ENCODE measurements at regions of chr15 and their contacts with region 1.

Region 1: GRCh38 chr15:61871926-61872522 is 188.2 kb downstream of the VPS13C start:
- DNase-seq: no peak
- ATAC-seq: no peak
- H3K4me3 ChIP-seq: no peak overlapping the region
- H3K27ac ChIP-seq: no peak overlapping the region
- H3K4me1 ChIP-seq: no peaks in the 10 kb centered on the region
- H3K27me3 ChIP-seq: no peaks in the 10 kb centered on the region
- CTCF ChIP-seq: peak in 4 of 5 experiments; percentile 24 to 57 (median 48)
- POLR2A ChIP-seq: no peak

Region 2: DNA sequence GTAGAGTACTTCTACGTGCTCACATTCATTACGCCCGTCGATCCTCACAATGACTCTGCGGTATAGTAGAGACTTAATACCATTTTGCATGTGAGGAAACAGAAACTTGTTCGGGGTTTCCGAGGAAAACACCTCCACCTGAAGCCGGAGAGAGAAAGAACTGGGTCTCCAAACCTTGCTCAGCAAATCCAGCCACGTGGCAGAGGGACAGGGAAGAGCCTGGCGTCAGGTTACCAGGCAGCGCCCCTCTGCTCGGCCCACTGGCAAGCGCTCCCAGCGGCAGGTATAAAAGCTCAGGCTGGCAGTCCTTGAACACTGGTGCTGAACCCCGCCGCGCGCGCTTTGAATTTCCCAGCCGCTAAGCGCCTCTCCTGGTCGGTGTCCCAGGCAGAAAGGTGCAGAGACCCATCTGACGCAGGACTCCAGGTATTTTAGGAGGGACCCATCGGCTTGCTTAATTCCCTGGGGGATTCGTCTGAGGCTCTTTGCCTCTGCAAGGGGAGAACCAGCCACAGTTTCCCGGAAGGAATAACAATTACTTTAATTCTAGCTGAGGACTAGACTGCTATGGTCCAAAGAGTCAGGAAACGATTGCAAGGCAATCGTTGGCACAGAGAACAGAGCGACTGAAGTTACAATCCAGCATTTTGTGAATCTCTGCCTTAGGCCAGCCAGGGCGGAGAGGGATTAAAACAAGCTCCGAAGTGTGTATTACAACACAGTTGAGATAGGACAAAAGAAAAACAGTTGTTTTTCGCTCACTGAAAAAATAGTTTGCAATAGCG is 194.8 kb after region 1 on chr15 and contains the start of gene C2CD4A:
- in situ Hi-C with region 1: no loop called
- intact Hi-C with region 1: loop called (anchors 5 kb)
- DNase-seq: peak; percentile 30 to 55
- ATAC-seq: peak; percentile 56 to 73
- H3K4me3 ChIP-seq: peak within 1 kb of the TSS; percentile 50 to 70 (median 62)
- H3K27ac ChIP-seq: peak within 1 kb of the TSS in 3 of 4 donors; percentile 14 to 32 (median 24)
- H3K4me1 ChIP-seq: peaks cover 9 to 12% of the 10 kb centered on the region in 2 donors
- H3K27me3 ChIP-seq: no peaks in the 10 kb centered on the region
- CTCF ChIP-seq: peak in 2 of 5 experiments; percentile 33 to 36
- POLR2A ChIP-seq: peak in 1 of 2 donors; percentile 26
- total RNA-seq, gene C2CD4A: 0.23 to 0.66 (median 0.47) TPM in 3 of 4 donors, not detected in the other

Region 3: GRCh38 chr15:62306851-62307504 is 435.0 kb after region 1 on chr15:
- in situ Hi-C with region 1: loop called in 1 of 4 experiments (anchors 25 kb)
- intact Hi-C with region 1: loop called (anchors 5 kb)
- DNase-seq: peak; percentile 37 to 42
- ATAC-seq: peak; percentile 87 to 88
- H3K4me3 ChIP-seq: no peak overlapping the region
- H3K27ac ChIP-seq: no peak overlapping the region
- H3K4me1 ChIP-seq: peaks cover 0 to 8% of the 10 kb centered on the region in 2 donors
- H3K27me3 ChIP-seq: no peaks in the 10 kb centered on the region
- CTCF ChIP-seq: peak; percentile 43 to 65 (median 54)
- POLR2A ChIP-seq: no peak

Measured in gastrocnemius medialis (tissue), 4 donors.